ENCODE measurements at regions of chr6 and their contacts with region 1.

Region 1: GRCh38 chr6:89432875-89433251 is at the start of gene ANKRD6:
- DNase-seq: peak; percentile 29 to 97
- H3K4me3 ChIP-seq: peak within 1 kb of the TSS; percentile 42 to 79 (median 51)
- H3K27ac ChIP-seq: no peak within 1 kb of the TSS
- H3K4me1 ChIP-seq: peaks cover 0 to 6% (median 2%) of the 10 kb centered on the region in 4 experiments; a peak in 3 of 7 replicates
- H3K27me3 ChIP-seq: peaks cover 0 to 16% (median 6%) of the 10 kb centered on the region in 4 experiments; a peak in 5 of 7 replicates
- CTCF ChIP-seq: peak; percentile 83 to 98 (median 92)
- EP300 ChIP-seq: peak in 1 of 2 experiments; percentile 39; a peak in 1 of 3 replicates
- POLR2A ChIP-seq: no peak
- RAD21 ChIP-seq: peak; percentile 86 to 100
- total RNA-seq, gene ANKRD6: 11.0 and 12.8 TPM in 2 replicates

Region 2: DNA sequence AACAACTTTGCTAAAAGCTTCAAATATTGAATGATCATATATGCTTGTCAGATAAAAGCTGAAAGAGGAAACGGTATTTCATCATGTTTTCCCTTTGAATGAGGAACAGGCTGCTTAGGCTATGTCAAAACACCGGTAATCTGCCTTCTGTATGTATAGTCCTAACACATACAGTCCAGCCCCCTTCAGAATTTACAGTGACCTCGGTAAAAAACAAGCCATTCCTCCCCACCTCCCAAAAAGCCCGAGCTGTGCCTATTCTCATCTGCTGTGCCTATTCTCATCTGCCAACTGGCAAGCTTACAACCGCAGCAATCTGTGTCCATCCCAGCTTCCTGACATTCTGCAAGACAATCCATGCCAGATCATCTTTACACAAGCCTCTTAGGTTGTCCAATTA is 53.6 kb before region 1 on chr6:
- CTCF ChIA-PET with region 1: interaction called, 10 read pairs
- POLR2A ChIA-PET with region 1: no interaction called
- DNase-seq: no peak
- H3K4me3 ChIP-seq: no peak overlapping the region
- H3K27ac ChIP-seq: no peak overlapping the region
- H3K4me1 ChIP-seq: peaks cover 0 to 7% (median 4%) of the 10 kb centered on the region in 4 experiments; a peak in 4 of 7 replicates
- H3K27me3 ChIP-seq: no peaks in the 10 kb centered on the region
- CTCF ChIP-seq: no peak
- EP300 ChIP-seq: no peak
- POLR2A ChIP-seq: no peak
- RAD21 ChIP-seq: no peak

Region 3: DNA sequence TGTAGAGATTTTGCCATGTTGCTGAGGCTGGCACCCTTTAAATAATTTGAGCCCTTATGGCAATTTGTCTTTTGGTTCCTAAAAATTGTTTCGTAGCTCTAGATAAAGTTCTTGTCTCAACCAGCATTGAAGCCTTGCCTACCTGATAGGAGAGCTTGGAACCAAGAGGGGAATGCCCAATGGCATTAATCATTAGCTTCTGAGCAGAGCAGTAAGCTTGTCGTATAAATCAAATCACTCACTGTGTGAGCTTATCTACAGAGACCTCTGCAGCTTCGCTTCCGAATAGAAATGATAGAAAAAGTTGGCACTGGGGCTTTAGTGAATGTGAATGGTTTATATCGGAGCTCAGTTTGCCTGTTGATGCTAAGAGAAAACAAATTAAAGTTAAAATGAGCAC is 10.8 kb after region 1 on chr6:
- CTCF ChIA-PET with region 1: interaction called, 11 read pairs
- POLR2A ChIA-PET with region 1: no interaction called
- DNase-seq: no peak
- H3K4me3 ChIP-seq: no peak overlapping the region
- H3K27ac ChIP-seq: no peak overlapping the region
- H3K4me1 ChIP-seq: no peaks in the 10 kb centered on the region
- H3K27me3 ChIP-seq: peaks cover 0 to 6% (median 0%) of the 10 kb centered on the region in 4 experiments; a peak in 1 of 7 replicates
- CTCF ChIP-seq: no peak
- EP300 ChIP-seq: no peak
- POLR2A ChIP-seq: no peak
- RAD21 ChIP-seq: no peak

Region 4: GRCh38 chr6:89597988-89598692 is 165.3 kb after region 1 on chr6:
- CTCF ChIA-PET with region 1: interaction called, 34 read pairs
- POLR2A ChIA-PET with region 1: no interaction called
- DNase-seq: no peak
- H3K4me3 ChIP-seq: no peak overlapping the region
- H3K27ac ChIP-seq: no peak overlapping the region
- H3K4me1 ChIP-seq: no peaks in the 10 kb centered on the region
- H3K27me3 ChIP-seq: 0 out of 7 replicates have a peak, but pooled peaks cover 0 to 2% (median 0%) of the 10 kb centered on the region in 4 experiments
- CTCF ChIP-seq: no peak; a peak in 1 of 4 replicates
- EP300 ChIP-seq: no peak
- POLR2A ChIP-seq: no peak
- RAD21 ChIP-seq: peak; percentile 46 to 49

Region 5: GRCh38 chr6:89610149-89610642 is 177.3 kb after region 1 on chr6:
- CTCF ChIA-PET with region 1: interaction called, 183 read pairs
- POLR2A ChIA-PET with region 1: interaction called, 4 read pairs
- DNase-seq: peak in 1 of 2 experiments; percentile 90
- H3K4me3 ChIP-seq: no peak overlapping the region
- H3K27ac ChIP-seq: no peak overlapping the region
- H3K4me1 ChIP-seq: no peaks in the 10 kb centered on the region
- H3K27me3 ChIP-seq: no peaks in the 10 kb centered on the region
- CTCF ChIP-seq: peak; percentile 80 to 89 (median 82)
- EP300 ChIP-seq: no peak
- POLR2A ChIP-seq: no peak
- RAD21 ChIP-seq: peak; percentile 75 to 77

Region 6: DNA sequence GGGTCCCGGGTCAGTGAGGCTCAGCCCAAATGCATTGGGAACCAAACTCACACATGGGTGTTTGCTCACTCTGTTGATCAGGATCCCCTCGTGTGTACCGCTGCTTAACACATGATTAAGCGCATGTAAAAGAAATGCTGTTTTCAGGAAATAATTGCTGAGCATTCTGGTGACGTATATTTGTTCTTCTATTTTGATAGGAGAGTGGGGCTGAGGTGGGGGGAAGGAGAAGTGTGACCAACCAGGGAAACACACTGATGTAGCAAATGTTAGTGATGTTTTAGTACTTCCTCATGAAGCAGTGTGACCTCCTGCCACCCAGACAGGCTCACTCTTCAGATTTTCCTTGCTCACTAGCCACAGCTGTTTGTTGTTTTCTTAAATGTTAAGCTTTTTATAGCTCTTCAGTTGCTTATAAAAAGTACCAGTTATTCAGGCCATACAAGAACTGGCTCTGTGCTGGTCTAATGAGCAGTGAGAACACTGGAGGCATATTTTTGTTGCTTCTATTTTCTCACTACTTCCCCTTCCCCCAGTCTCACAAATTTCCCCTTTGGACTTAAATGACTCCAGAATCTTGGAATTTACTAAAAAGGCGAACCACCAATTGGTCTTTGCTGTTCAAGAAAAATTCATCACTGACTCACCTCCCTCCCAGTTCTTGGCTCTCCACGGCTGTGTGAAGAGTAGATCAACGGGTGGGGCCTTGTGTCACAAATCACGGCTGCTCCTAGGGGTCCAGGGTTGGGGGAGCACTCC is 943.0 kb after region 1 on chr6:
- CTCF ChIA-PET with region 1: no interaction called
- POLR2A ChIA-PET with region 1: no interaction called
- DNase-seq: no peak
- H3K4me3 ChIP-seq: no peak overlapping the region
- H3K27ac ChIP-seq: no peak overlapping the region
- H3K4me1 ChIP-seq: no peaks in the 10 kb centered on the region
- H3K27me3 ChIP-seq: no peaks in the 10 kb centered on the region
- CTCF ChIP-seq: no peak
- EP300 ChIP-seq: no peak
- POLR2A ChIP-seq: no peak
- RAD21 ChIP-seq: no peak

Measured in H1 (cell line).